Caco-2 (cell line): ENCODE measurements at regions of chr3 and their contacts with region 1.

Region 1: DNA sequence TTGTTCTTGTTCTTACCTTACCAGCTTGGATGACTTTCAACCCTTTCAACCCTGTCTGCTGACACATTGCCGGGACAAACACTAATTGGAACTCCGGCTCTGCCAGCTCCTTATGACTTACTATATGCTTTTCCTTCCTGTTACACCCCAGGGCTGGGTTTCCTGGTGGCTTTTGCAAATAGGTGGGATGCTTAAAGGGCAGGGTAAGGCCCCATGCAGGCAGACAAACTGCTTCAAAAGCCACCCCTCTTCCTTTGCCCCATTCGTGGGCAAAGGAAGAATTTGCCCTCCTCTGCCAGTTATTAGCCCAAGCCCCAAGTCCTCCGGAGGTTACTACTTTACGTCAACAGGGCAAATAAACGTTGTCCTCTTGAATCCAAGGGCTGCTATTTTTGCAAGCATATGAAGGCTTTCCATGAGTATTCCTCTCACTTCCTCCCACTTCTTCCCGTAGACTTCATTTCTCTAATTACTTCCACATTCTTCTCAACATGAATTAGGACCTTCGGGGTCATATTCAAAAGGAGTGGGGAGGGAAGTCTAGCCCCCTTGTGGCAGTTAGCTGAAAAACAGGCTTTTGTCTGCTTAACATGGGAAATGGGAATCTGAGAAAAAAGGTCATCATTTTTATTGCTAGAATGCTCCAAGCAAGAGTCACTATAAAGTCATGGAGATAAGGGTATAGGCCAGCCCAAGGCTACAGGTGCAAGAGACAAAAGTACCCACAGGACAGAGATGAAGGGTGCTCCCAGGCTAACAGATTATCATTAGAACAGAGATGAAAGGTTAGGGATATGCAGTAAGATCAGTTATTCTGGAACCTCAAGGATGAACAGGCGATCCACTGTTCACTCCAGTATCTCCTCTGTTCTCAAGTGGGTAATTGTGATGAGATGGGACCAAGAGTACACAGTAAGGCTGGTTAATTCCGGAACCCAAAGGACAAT is 56.3 kb upstream of the FSTL1 start:
- DNase-seq: peak; percentile 35 to 44
- H3K4me3 ChIP-seq: no peak overlapping the region
- H3K4me3 Mint-ChIP-seq: no peak overlapping the region
- H3K27ac Mint-ChIP-seq: no peak overlapping the region
- H3K4me1 ChIP-seq: no peaks in the 10 kb centered on the region
- H3K4me1 Mint-ChIP-seq: no peaks in the 10 kb centered on the region
- H3K27me3 ChIP-seq: no peaks in the 10 kb centered on the region; the same call in 1 of the 2 replicates
- H3K27me3 Mint-ChIP-seq: no peaks in the 10 kb centered on the region
- CTCF ChIP-seq: peak; percentile 46 to 51

Region 2: GRCh38 chr3:120245386-120245785 is 261.7 kb before region 1 on chr3:
- CTCF ChIA-PET with region 1: no interaction called
- POLR2A ChIA-PET with region 1: no interaction called
- intact Hi-C with region 1: loop called (anchors 1 kb)
- DNase-seq: no peak
- H3K4me3 ChIP-seq: no peak overlapping the region
- H3K4me3 Mint-ChIP-seq: no peak overlapping the region
- H3K27ac Mint-ChIP-seq: no peak overlapping the region
- H3K4me1 ChIP-seq: no peaks in the 10 kb centered on the region
- H3K4me1 Mint-ChIP-seq: no peaks in the 10 kb centered on the region
- H3K27me3 ChIP-seq: no peaks in the 10 kb centered on the region
- H3K27me3 Mint-ChIP-seq: no peaks in the 10 kb centered on the region
- CTCF ChIP-seq: no peak

Region 3: GRCh38 chr3:120469447-120469846 is 37.7 kb before region 1 on chr3:
- CTCF ChIA-PET with region 1: no interaction called
- POLR2A ChIA-PET with region 1: no interaction called
- intact Hi-C with region 1: loop called (anchors 5 kb)
- DNase-seq: peak; percentile 83 to 88
- H3K4me3 ChIP-seq: no peak overlapping the region
- H3K4me3 Mint-ChIP-seq: peak overlapping the region; percentile 24
- H3K27ac Mint-ChIP-seq: peak overlapping the region; percentile 80
- H3K4me1 ChIP-seq: peaks cover 69% of the 10 kb centered on the region
- H3K4me1 Mint-ChIP-seq: peaks cover 42% of the 10 kb centered on the region
- H3K27me3 ChIP-seq: no peaks in the 10 kb centered on the region
- H3K27me3 Mint-ChIP-seq: no peaks in the 10 kb centered on the region
- CTCF ChIP-seq: no peak

Region 4: DNA sequence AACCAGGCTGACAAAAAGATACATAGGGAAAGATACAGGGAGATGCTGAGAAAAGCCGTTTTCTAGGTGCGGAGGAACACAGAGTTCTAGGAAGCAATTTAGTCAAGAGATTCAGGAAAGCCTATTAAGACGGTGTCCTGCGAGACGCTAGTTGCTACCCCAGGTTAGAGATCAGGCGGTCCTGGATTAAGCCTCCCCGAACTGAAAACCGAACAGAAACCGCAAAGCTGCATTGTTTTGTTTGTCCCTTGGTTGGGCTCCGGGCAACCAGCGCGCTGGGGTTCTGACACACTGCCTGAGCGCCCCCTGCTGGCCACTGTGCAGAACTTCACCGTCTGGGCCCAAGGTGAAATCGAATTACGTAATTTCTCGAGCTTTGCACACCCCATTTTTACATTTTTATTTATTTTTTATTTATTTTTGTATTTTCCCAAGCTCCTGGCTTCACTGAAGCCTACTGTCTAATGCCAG is 51.7 kb after region 1 on chr3:
- CTCF ChIA-PET with region 1: interaction called, 3 read pairs
- POLR2A ChIA-PET with region 1: no interaction called
- intact Hi-C with region 1: loop called (anchors 2 kb)
- DNase-seq: peak; percentile 72 to 85
- H3K4me3 ChIP-seq: peak overlapping the region; percentile 16
- H3K4me3 Mint-ChIP-seq: peak overlapping the region; percentile 68
- H3K27ac Mint-ChIP-seq: peak overlapping the region; percentile 56
- H3K4me1 ChIP-seq: no peaks in the 10 kb centered on the region
- H3K4me1 Mint-ChIP-seq: peaks cover 14% of the 10 kb centered on the region
- H3K27me3 ChIP-seq: no peaks in the 10 kb centered on the region
- H3K27me3 Mint-ChIP-seq: peaks cover 3% of the 10 kb centered on the region
- CTCF ChIP-seq: peak; percentile 86 to 91

Region 5: GRCh38 chr3:120569222-120570060 is 62.3 kb after region 1 on chr3:
- CTCF ChIA-PET with region 1: no interaction called
- POLR2A ChIA-PET with region 1: no interaction called
- intact Hi-C with region 1: no loop called
- DNase-seq: no peak
- H3K4me3 ChIP-seq: no peak overlapping the region
- H3K4me3 Mint-ChIP-seq: no peak overlapping the region
- H3K27ac Mint-ChIP-seq: no peak overlapping the region
- H3K4me1 ChIP-seq: no peaks in the 10 kb centered on the region
- H3K4me1 Mint-ChIP-seq: no peaks in the 10 kb centered on the region
- H3K27me3 ChIP-seq: no peaks in the 10 kb centered on the region
- H3K27me3 Mint-ChIP-seq: no peaks in the 10 kb centered on the region
- CTCF ChIP-seq: no peak